Activated CD4-positive, alpha-beta T cell treated with anti-CD3 and anti-CD28 coated beads, Interleukin-2, amount 10 ng/mL, durations not matched to agents 7 days and 5 days (primary cell): ENCODE measurements at regions of chr6 and their contacts with region 1.

Region 1: GRCh38 chr6:159134701-159135364 is 34.4 kb upstream of the FNDC1 start:
- DNase-seq: peak; percentile 80
- H3K4me3 Mint-ChIP-seq: no peak overlapping the region
- H3K27ac Mint-ChIP-seq: no peak overlapping the region
- H3K4me1 Mint-ChIP-seq: peaks cover 11% of the 10 kb centered on the region
- H3K27me3 Mint-ChIP-seq: peaks cover 29% of the 10 kb centered on the region

Region 2: DNA sequence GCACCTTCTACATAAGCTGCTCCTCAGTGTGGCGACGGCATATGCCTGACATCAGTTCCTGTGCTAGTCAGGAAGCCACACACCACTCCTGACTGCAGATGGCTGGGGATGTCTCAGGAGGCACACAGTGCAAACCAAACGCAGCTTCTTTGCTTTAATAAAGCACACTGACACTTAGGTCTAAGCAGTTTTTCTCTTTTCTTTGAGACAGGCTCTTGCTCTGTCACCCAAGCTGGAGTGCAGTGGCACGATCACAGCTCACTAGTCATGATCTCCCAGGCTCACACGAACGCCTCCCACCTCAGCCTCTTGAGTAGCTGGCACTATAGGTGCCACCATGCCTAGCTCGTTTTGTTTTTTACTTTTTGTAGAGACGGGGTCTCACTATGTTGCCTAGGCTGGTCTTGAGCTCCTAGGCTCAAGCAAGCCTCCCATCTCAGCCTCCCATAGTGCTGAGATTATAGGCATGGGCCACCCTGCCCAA is 345.4 kb before region 1 on chr6:
- CTCF ChIA-PET with region 1: interaction called, 10 read pairs
- POLR2A ChIA-PET with region 1: no interaction called
- DNase-seq: peak; percentile 82
- H3K4me3 Mint-ChIP-seq: peak overlapping the region; percentile 47
- H3K27ac Mint-ChIP-seq: peak overlapping the region; percentile 86
- H3K4me1 Mint-ChIP-seq: peaks cover 68% of the 10 kb centered on the region
- H3K27me3 Mint-ChIP-seq: no peaks in the 10 kb centered on the region

Region 3: DNA sequence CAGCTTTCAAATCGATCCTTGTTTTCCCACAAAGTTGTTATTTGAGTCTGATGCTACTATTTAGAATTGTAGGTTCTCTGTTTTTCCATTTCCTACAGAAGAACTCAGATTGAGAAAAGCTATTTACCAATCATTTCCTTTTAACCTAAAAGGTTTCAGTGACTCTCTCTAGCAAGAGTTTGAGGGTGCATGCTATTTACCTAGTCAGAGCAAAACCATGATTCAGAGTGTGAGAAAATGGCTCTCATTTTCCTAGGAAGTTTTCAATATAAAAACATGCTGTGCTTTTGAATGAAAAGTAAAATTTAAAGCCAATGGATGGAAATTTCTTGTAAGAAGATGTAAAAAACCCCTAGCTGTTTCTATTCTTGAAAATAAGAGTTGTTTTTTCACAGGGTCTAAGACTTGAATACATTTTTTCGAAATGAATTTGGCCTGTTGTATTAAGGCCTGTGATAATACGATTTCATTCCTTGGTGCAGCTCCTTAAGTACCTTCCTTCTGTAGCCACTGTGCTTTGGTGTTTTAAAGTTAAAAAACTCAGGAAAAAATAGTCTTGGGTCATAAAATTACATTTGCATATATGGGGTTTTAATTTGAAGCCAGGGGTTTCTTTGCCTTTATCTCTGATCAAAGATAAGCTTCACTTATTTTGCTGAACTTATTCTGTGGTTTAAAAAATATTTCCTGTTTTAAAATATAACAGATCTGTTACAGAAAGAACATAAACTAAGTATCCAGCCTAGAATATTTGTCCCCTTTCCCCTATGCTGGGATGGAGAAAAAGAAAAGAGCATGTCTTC is 116.9 kb before region 1 on chr6:
- CTCF ChIA-PET with region 1: interaction called, 15 read pairs
- POLR2A ChIA-PET with region 1: no interaction called
- DNase-seq: no peak
- H3K4me3 Mint-ChIP-seq: no peak overlapping the region
- H3K27ac Mint-ChIP-seq: peak overlapping the region; percentile 41
- H3K4me1 Mint-ChIP-seq: peaks cover 30% of the 10 kb centered on the region
- H3K27me3 Mint-ChIP-seq: no peaks in the 10 kb centered on the region